ENCODE measurements at regions of chr3 and their contacts with region 1.

Region 1: GRCh38 chr3:15377961-15378791 is 45.8 kb upstream of the SH3BP5 start:
- DNase-seq: peak; percentile 93 to 98
- ATAC-seq: peak; percentile 96 to 98 (median 98)
- H3K4me3 ChIP-seq: no peak overlapping the region
- H3K4me3 Mint-ChIP-seq: peak overlapping the region; percentile 42
- H3K27ac ChIP-seq: peak overlapping the region; percentile 98
- H3K27ac Mint-ChIP-seq: peak overlapping the region; percentile 95
- H3K4me1 ChIP-seq: peaks cover 5% of the 10 kb centered on the region
- H3K4me1 Mint-ChIP-seq: peaks cover 8 to 9% of the 10 kb centered on the region in 2 donors
- H3K27me3 ChIP-seq: no peaks in the 10 kb centered on the region
- H3K27me3 Mint-ChIP-seq: no peaks in the 10 kb centered on the region
- CTCF ChIP-seq: peak; percentile 91

Region 2: DNA sequence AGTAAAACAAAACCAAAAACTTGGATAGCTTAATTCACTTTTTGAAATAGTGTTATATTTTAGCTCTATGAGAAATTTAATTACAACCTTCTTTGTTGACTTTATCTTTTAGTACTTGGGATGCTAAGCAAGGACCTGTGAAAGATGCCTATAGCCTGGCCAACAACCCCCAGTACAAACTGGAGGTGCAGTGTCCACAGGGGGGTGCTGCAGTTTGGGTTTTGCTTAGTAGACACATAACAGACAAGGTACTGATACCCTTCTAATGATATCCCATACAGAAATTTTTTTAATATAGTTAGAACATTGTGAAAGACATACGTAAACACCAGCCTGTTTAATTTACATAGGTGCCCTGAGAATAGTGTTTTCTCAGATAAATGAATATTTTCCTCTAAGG is 136.8 kb before region 1 on chr3:
- intact Hi-C with region 1: loop called (anchors 1 kb)
- DNase-seq: peak; percentile 37 to 68
- ATAC-seq: peak; percentile 70 to 88 (median 86)
- H3K4me3 ChIP-seq: no peak overlapping the region
- H3K4me3 Mint-ChIP-seq: no peak overlapping the region
- H3K27ac ChIP-seq: no peak overlapping the region
- H3K27ac Mint-ChIP-seq: peak overlapping the region in 1 of 2 donors; percentile 31
- H3K4me1 ChIP-seq: no peaks in the 10 kb centered on the region
- H3K4me1 Mint-ChIP-seq: peaks cover 10% of the 10 kb centered on the region in 2 donors
- H3K27me3 ChIP-seq: no peaks in the 10 kb centered on the region
- H3K27me3 Mint-ChIP-seq: no peaks in the 10 kb centered on the region
- CTCF ChIP-seq: peak; percentile 40

Region 3: DNA sequence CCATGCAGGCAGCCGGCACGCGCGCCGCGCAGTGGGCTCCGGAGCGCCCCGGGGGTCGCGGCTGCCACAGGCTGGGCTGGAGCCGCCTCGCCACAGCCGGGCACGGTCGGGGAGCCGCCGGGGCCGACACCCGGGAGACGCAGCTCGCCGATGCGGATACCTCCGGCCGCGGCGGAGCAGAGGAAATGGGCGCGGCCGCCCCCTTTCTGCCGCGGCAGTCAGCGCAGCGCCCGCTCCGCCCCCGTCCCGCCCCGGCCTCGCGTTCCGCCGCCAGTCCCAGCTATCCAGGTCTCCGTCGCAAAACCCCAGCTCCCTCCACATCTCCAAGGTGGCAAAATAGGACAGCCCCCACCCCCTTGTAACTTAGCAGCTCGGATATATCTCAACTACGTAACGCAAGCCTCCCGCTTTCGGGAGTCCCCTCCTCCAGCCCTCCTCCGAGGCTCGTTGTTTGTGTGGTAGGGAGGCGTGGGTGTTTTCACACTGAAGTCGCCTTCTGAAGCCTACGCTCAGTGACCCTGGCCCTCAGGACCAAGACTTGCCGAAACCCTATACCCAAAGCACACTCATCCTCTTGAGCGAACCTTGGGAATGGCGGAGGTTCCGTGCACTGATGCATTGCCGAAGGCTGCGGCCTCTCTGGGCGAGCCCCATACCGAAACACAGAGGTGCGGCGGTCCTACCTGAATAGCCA is 45.6 kb before region 1 on chr3 and contains the start of gene SH3BP5:
- intact Hi-C with region 1: loop called (anchors 1 kb)
- DNase-seq: peak; percentile 75 to 87
- ATAC-seq: peak; percentile 90 to 96 (median 94)
- H3K4me3 ChIP-seq: peak within 1 kb of the TSS; percentile 97
- H3K4me3 Mint-ChIP-seq: peak within 1 kb of the TSS; percentile 97
- H3K27ac ChIP-seq: peak within 1 kb of the TSS; percentile 58
- H3K27ac Mint-ChIP-seq: peak within 1 kb of the TSS; percentile 88 to 95
- H3K4me1 ChIP-seq: peaks cover 27% of the 10 kb centered on the region
- H3K4me1 Mint-ChIP-seq: peaks cover 42 to 55% of the 10 kb centered on the region in 2 donors
- H3K27me3 ChIP-seq: no peaks in the 10 kb centered on the region
- H3K27me3 Mint-ChIP-seq: no peaks in the 10 kb centered on the region
- CTCF ChIP-seq: peak; percentile 61
- total RNA-seq, gene SH3BP5: 89.4 to 129 (median 91.0) TPM

Region 4: GRCh38 chr3:15427182-15427880 is 49.2 kb after region 1 on chr3 and contains the starts of genes EAF1 and METTL6:
- intact Hi-C with region 1: loop called (anchors 1 kb)
- DNase-seq: peak; percentile 78 to 90
- ATAC-seq: peak; percentile 76 to 89 (median 84)
- H3K4me3 ChIP-seq: peak within 1 kb of the TSS; percentile 97
- H3K4me3 Mint-ChIP-seq: peak within 1 kb of the TSS; percentile 98
- H3K27ac ChIP-seq: peak within 1 kb of the TSS; percentile 80
- H3K27ac Mint-ChIP-seq: peak within 1 kb of the TSS; percentile 96 to 97
- H3K4me1 ChIP-seq: peaks cover 23% of the 10 kb centered on the region
- H3K4me1 Mint-ChIP-seq: peaks cover 56 to 61% of the 10 kb centered on the region in 2 donors
- H3K27me3 ChIP-seq: no peaks in the 10 kb centered on the region
- H3K27me3 Mint-ChIP-seq: no peaks in the 10 kb centered on the region
- CTCF ChIP-seq: peak; percentile 29
- total RNA-seq, gene EAF1: 39.7 to 45.8 (median 41.5) TPM
- total RNA-seq, gene METTL6: 9.8 to 13.3 (median 11.8) TPM

Region 5: GRCh38 chr3:16090024-16090423 is 711.8 kb after region 1 on chr3:
- intact Hi-C with region 1: no loop called
- DNase-seq: no peak
- ATAC-seq: no peak
- H3K4me3 ChIP-seq: no peak overlapping the region
- H3K4me3 Mint-ChIP-seq: no peak overlapping the region
- H3K27ac ChIP-seq: no peak overlapping the region
- H3K27ac Mint-ChIP-seq: no peak overlapping the region
- H3K4me1 ChIP-seq: no peaks in the 10 kb centered on the region
- H3K4me1 Mint-ChIP-seq: no peaks in the 10 kb centered on the region
- H3K27me3 ChIP-seq: no peaks in the 10 kb centered on the region
- H3K27me3 Mint-ChIP-seq: peaks cover 0 to 3% of the 10 kb centered on the region in 2 donors
- CTCF ChIP-seq: no peak

Measured in natural killer cell (primary cell).